ENCODE measurements at regions of chr15 and their contacts with region 1.

Region 1: GRCh38 chr15:88139936-88140335 is 116.6 kb downstream of the NTRK3 start:
- DNase-seq: no peak
- H3K4me3 ChIP-seq: no peak overlapping the region
- H3K27ac ChIP-seq: no peak overlapping the region
- H3K4me1 ChIP-seq: no peaks in the 10 kb centered on the region
- H3K27me3 ChIP-seq: no peaks in the 10 kb centered on the region
- CTCF ChIP-seq: no peak

Region 2: GRCh38 chr15:87660251-87661129 is 479.4 kb before region 1 on chr15:
- CTCF ChIA-PET with region 1: no interaction called
- POLR2A ChIA-PET with region 1: interaction called, 10 read pairs
- intact Hi-C with region 1: no loop called
- DNase-seq: no peak
- H3K4me3 ChIP-seq: no peak overlapping the region
- H3K27ac ChIP-seq: no peak overlapping the region
- H3K4me1 ChIP-seq: no peaks in the 10 kb centered on the region
- H3K27me3 ChIP-seq: no peaks in the 10 kb centered on the region
- CTCF ChIP-seq: no peak

Region 3: DNA sequence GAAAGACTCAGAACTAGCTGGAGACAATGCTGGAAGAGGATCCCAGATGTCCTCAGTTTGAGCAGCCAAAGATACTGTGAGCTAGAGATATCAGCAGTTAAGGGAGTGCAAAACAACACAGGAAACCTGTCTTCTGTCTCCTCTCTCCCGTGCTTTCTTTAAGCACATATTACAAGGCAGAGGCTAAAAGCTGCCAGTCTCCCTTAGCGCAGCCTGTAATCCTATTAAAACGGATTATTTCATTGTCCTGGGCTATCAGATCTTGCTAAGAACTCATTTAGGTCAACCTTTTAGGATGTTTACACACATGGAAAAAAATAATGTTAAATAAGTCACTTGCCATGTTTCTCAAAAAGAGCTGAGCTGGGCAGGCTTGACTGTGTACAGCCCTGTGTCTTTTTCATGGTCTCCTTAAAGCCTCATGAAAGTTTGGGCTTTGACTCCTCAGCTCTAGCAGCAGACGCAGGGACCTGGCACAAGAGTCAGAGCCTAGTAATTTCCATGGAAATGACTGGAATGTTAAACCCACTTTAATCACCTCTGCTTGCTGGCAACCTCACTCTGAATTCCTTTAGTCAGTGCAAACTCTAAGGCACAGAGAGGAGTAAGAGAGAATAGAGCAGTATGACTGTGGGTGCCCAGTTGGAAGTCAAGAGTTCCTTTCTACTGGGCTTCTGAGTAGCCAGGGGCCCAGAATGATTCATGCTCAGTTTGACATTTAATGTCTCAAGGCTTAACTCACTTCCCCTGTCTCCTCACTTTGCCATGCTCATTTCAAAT is 375.3 kb before region 1 on chr15:
- CTCF ChIA-PET with region 1: no interaction called
- POLR2A ChIA-PET with region 1: no interaction called
- intact Hi-C with region 1: no loop called
- DNase-seq: peak; percentile 46
- H3K4me3 ChIP-seq: no peak overlapping the region
- H3K27ac ChIP-seq: no peak overlapping the region
- H3K4me1 ChIP-seq: no peaks in the 10 kb centered on the region
- H3K27me3 ChIP-seq: no peaks in the 10 kb centered on the region
- CTCF ChIP-seq: no peak

Region 4: GRCh38 chr15:88166082-88166993 is 26.4 kb after region 1 on chr15:
- CTCF ChIA-PET with region 1: no interaction called
- POLR2A ChIA-PET with region 1: no interaction called
- intact Hi-C with region 1: no loop called
- DNase-seq: peak; percentile 10
- H3K4me3 ChIP-seq: no peak overlapping the region
- H3K27ac ChIP-seq: no peak overlapping the region
- H3K4me1 ChIP-seq: no peaks in the 10 kb centered on the region
- H3K27me3 ChIP-seq: no peaks in the 10 kb centered on the region
- CTCF ChIP-seq: no peak

Region 5: DNA sequence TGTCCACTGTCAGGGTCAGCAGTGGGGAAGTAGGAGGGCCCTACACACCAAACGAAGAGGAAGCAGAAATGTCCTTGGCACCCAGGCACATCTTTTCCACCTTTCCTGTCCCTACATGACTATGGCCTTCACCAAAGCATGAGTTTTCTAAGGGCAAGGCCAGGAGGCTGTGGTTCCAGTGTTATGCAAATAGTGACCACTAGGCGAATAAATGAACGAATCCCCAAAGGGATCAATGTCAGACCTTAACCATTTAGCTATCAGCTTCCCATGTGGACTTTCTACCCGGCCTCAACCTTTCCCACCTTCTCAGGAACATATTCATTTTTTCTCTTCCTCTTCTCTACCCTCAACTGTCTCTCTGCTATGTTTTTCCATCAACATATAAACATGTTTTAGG is 53.5 kb after region 1 on chr15:
- CTCF ChIA-PET with region 1: no interaction called
- POLR2A ChIA-PET with region 1: no interaction called
- intact Hi-C with region 1: no loop called
- DNase-seq: peak; percentile 5
- H3K4me3 ChIP-seq: no peak overlapping the region
- H3K27ac ChIP-seq: no peak overlapping the region
- H3K4me1 ChIP-seq: no peaks in the 10 kb centered on the region
- H3K27me3 ChIP-seq: peaks cover 7% of the 10 kb centered on the region
- CTCF ChIP-seq: peak; percentile 14; the same call in 1 of the 2 replicates

Region 6: GRCh38 chr15:88454867-88455810 is 315.2 kb after region 1 on chr15:
- CTCF ChIA-PET with region 1: no interaction called
- POLR2A ChIA-PET with region 1: no interaction called
- intact Hi-C with region 1: no loop called
- DNase-seq: peak; percentile 81
- H3K4me3 ChIP-seq: no peak overlapping the region
- H3K27ac ChIP-seq: no peak overlapping the region
- H3K4me1 ChIP-seq: no peaks in the 10 kb centered on the region
- H3K27me3 ChIP-seq: no peaks in the 10 kb centered on the region
- CTCF ChIP-seq: peak; percentile 80

Measured in A673 (cell line).